ENCODE measurements at regions of chr3 and their contacts with region 1.

Region 1: GRCh38 chr3:10417849-10418248 is 87.5 kb downstream of the ATP2B2 start:
- DNase-seq: peak in 1 of 35 experiments; percentile 34
- ATAC-seq: no peak
- H3K4me3 ChIP-seq: no peak overlapping the region
- H3K4me3 Mint-ChIP-seq: no peak overlapping the region
- H3K27ac ChIP-seq: no peak overlapping the region
- H3K27ac Mint-ChIP-seq: no peak overlapping the region
- H3K4me1 ChIP-seq: peaks cover 0 to 12% of the 10 kb centered on the region in 2 experiments
- H3K4me1 Mint-ChIP-seq: peaks cover 10 to 11% (median 10%) of the 10 kb centered on the region in 3 donors
- H3K27me3 ChIP-seq: peaks cover 0 to 22% of the 10 kb centered on the region in 2 experiments
- H3K27me3 Mint-ChIP-seq: peaks cover 4 to 9% of the 10 kb centered on the region in 2 donors

Region 2: GRCh38 chr3:10398341-10398740 is 19.5 kb before region 1 on chr3:
- CTCF ChIA-PET with region 1: no interaction called
- POLR2A ChIA-PET with region 1: no interaction called
- DNase-seq: no peak
- ATAC-seq: no peak
- H3K4me3 ChIP-seq: no peak overlapping the region
- H3K4me3 Mint-ChIP-seq: no peak overlapping the region
- H3K27ac ChIP-seq: no peak overlapping the region
- H3K27ac Mint-ChIP-seq: peak overlapping the region in 1 of 2 donors; percentile 44
- H3K4me1 ChIP-seq: peaks cover 13 to 46% of the 10 kb centered on the region in 2 experiments
- H3K4me1 Mint-ChIP-seq: peaks cover 29 to 50% (median 48%) of the 10 kb centered on the region in 3 donors
- H3K27me3 ChIP-seq: no peaks in the 10 kb centered on the region
- H3K27me3 Mint-ChIP-seq: peaks cover 0 to 3% of the 10 kb centered on the region in 2 donors

Region 3: GRCh38 chr3:10738688-10739372 is 321.0 kb after region 1 on chr3:
- CTCF ChIA-PET with region 1: interaction called, 3 to 12 read pairs
- POLR2A ChIA-PET with region 1: no interaction called
- DNase-seq: peak; percentile 11 to 78 (median 63)
- ATAC-seq: peak; percentile 65 to 77 (median 72)
- H3K4me3 ChIP-seq: peak overlapping the region in 1 of 2 donors; percentile 53
- H3K4me3 Mint-ChIP-seq: peak overlapping the region in 2 of 3 donors; percentile 6 to 60
- H3K27ac ChIP-seq: no peak overlapping the region
- H3K27ac Mint-ChIP-seq: no peak overlapping the region
- H3K4me1 ChIP-seq: peaks cover 0 to 9% of the 10 kb centered on the region in 2 experiments
- H3K4me1 Mint-ChIP-seq: peaks cover 9 to 16% (median 15%) of the 10 kb centered on the region in 3 donors
- H3K27me3 ChIP-seq: peaks cover 7 to 43% of the 10 kb centered on the region in 2 experiments
- H3K27me3 Mint-ChIP-seq: peaks cover 56 to 62% of the 10 kb centered on the region in 2 donors

Measured in T-cell (primary cell).